ENCODE measurements at regions of chr7 and their contacts with region 1.

Region 1: GRCh38 chr7:131493581-131493980 is 62.8 kb downstream of the PODXL start:
- DNase-seq: no peak
- H3K4me3 ChIP-seq: no peak overlapping the region
- H3K27ac ChIP-seq: no peak overlapping the region
- H3K27me3 ChIP-seq: no peaks in the 10 kb centered on the region
- CTCF ChIP-seq: no peak

Region 2: DNA sequence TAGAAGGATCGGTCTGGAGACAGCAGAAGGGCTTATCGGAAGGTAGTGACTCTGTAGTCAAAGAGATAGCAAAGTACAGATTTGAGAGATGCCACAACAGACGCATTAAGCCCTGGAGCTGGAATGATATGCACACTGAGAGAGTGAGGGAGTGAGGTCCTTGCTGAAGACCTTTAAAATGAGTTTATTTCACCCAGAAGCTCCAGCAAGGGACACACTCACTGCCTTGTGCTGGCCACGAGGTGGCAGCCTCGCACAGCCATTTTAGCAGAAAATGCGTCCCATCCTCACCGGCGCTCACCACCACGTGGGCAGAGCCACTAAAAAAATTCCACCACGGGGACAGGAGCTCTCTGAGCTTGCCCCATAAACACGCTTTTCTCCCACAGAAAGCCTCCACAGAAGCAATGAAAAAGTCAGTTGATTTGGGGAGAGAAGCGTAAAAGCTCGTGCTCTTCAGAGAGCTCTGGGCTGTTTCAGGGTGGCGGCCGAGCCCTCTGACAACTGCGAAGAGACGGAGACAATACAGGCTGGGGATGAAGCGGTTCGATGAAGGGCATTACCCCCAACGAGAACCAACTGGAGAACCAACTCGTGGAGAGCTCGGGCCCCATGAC is 596.6 kb before region 1 on chr7:
- CTCF ChIA-PET with region 1: no interaction called
- POLR2A ChIA-PET with region 1: no interaction called
- DNase-seq: no peak
- H3K4me3 ChIP-seq: no peak overlapping the region
- H3K27ac ChIP-seq: peak overlapping the region; percentile 89
- H3K27me3 ChIP-seq: no peaks in the 10 kb centered on the region
- CTCF ChIP-seq: peak; percentile 81

Region 3: DNA sequence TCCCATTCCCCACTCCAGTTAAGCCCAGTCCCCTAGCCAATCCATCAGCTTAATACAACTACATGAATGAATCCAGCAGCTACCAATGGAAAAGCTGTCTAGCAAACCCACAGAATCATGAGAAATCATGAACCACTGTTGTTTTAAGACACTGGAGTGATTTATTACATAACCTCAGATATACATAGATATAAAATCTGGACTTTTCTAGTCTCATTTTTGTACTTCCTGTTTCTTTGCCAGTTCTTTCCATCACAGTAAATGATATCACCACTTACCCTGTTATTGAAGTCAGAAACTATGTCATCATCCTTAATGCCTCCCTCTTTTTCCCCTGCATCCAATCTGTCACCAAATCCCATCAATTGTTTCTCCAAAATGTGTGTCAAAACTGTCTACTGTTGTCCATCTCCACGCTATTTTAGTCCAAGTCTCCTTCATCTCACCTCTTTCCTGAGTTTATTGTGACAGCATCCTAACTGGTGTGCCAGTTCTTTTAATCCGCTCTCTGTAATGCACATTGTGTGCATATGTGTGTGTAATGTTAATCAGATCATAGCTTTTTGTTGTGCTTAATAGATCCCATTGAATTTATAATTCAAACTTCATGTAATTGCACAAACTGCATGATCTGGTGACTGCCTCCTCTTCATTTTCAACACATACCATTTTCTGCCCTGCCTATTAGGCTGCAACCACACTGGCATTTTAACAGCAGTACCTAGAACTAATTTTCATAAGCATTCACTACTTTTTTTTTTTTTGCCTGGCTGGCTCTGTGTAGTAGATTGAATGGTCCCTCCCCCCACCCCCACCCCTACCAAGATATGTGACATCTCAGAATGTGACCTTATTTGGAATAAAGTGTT is 109.9 kb before region 1 on chr7:
- CTCF ChIA-PET with region 1: no interaction called
- POLR2A ChIA-PET with region 1: no interaction called
- DNase-seq: no peak
- H3K4me3 ChIP-seq: no peak overlapping the region
- H3K27ac ChIP-seq: no peak overlapping the region
- H3K27me3 ChIP-seq: no peaks in the 10 kb centered on the region
- CTCF ChIP-seq: no peak

Region 4: GRCh38 chr7:131507592-131508331 is 14.2 kb after region 1 on chr7:
- CTCF ChIA-PET with region 1: interaction called, 15 read pairs
- POLR2A ChIA-PET with region 1: no interaction called
- DNase-seq: peak; percentile 34
- H3K4me3 ChIP-seq: no peak overlapping the region
- H3K27ac ChIP-seq: peak overlapping the region; percentile 21
- H3K27me3 ChIP-seq: no peaks in the 10 kb centered on the region
- CTCF ChIP-seq: peak; percentile 96

Measured in AG04450 (cell line).